GM12878 (cell line): ENCODE measurements at regions of chr5 and their contacts with region 1.

Region 1: DNA sequence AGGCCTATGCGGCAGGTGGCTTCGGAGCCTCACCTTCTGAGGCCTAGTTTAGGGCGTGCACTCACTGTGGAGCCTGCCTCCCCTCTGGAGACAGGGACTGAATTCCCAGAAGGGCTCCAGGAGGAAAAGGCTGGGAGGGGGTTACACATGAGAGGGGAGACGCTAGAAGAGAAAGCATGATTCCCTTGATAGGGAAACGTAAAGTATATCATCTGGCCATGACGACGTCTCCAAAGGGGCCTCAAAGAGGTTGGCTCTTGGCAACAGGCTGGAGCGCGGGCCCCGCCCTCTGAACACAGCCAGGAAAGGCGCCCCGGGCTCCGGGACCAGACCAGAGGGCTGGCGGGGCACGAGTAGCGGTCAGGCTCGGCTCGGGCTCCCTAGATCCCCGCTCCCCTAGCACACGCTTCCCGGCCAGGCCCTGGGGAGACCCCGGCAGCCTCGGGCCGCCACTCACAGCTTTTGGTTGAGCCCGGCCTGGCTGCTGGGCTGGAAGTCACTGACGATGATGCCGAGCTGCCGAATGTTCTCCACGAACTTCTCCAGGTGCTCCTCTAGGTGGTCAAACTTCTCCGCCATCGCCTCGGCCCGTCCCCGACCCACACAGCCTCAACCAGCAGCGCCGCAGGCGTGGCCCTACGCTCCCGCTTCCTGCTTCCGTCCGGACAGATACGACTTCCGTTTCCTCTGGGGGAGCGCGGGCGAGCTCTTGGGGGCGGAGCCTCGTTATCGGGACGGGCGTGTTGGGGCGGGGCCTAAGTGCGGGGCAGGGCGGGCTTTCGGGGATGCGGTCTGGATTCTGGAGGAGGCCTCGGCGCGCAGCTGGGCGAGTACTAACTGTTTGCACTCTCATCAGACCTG is at the start of gene MED10:
- DNase-seq: peak; percentile 75
- ATAC-seq: peak; percentile 97
- H3K4me3 ChIP-seq: peak within 1 kb of the TSS; percentile 99
- H3K27ac ChIP-seq: peak within 1 kb of the TSS; percentile 82
- H3K4me1 ChIP-seq: no peaks in the 10 kb centered on the region; the same call in 1 of the 2 replicates
- H3K27me3 ChIP-seq: no peaks in the 10 kb centered on the region
- CTCF ChIP-seq: no peak
- EP300 ChIP-seq: no peak
- POLR2A ChIP-seq: peak; percentile 96
- RAD21 ChIP-seq: no peak
- polyA plus RNA-seq, gene MED10: 37.1 to 49.5 TPM

Region 2: GRCh38 chr5:6480133-6481051 is 102.3 kb after region 1 on chr5:
- CTCF ChIA-PET with region 1: no interaction called
- POLR2A ChIA-PET with region 1: interaction called, 4 read pairs
- RAD21 ChIA-PET with region 1: interaction called, 4 read pairs
- SMC1A ChIA-PET with region 1: interaction called, 4 read pairs
- in situ Hi-C with region 1: no loop called
- intact Hi-C with region 1: loop called (anchors 5 kb)
- DNase-seq: peak; percentile 67
- ATAC-seq: peak; percentile 72
- H3K4me3 ChIP-seq: no peak overlapping the region
- H3K27ac ChIP-seq: peak overlapping the region; percentile 22; the same call in 1 of the 2 replicates
- H3K4me1 ChIP-seq: peaks cover 54% of the 10 kb centered on the region
- H3K27me3 ChIP-seq: no peaks in the 10 kb centered on the region
- CTCF ChIP-seq: peak; percentile 12 to 38 (median 17); a peak in 3 of 6 replicates
- EP300 ChIP-seq: peak; percentile 28 to 58; a peak in 1 of 4 replicates
- POLR2A ChIP-seq: no peak
- RAD21 ChIP-seq: peak; percentile 44

Region 3: GRCh38 chr5:6525910-6526309 is 147.8 kb after region 1 on chr5:
- CTCF ChIA-PET with region 1: no interaction called
- POLR2A ChIA-PET with region 1: no interaction called
- RAD21 ChIA-PET with region 1: interaction called, 3 read pairs
- SMC1A ChIA-PET with region 1: interaction called, 3 read pairs
- in situ Hi-C with region 1: no loop called
- intact Hi-C with region 1: loop called (anchors 2 kb)
- DNase-seq: no peak
- ATAC-seq: peak; percentile 82
- H3K4me3 ChIP-seq: no peak overlapping the region
- H3K27ac ChIP-seq: no peak overlapping the region
- H3K4me1 ChIP-seq: no peaks in the 10 kb centered on the region
- H3K27me3 ChIP-seq: peaks cover 0 to 4% of the 10 kb centered on the region in 2 experiments; a peak in 1 of 4 replicates
- CTCF ChIP-seq: peak; percentile 40 to 68 (median 43); a peak in 4 of 6 replicates
- EP300 ChIP-seq: no peak
- POLR2A ChIP-seq: no peak
- RAD21 ChIP-seq: peak; percentile 61

Region 4: DNA sequence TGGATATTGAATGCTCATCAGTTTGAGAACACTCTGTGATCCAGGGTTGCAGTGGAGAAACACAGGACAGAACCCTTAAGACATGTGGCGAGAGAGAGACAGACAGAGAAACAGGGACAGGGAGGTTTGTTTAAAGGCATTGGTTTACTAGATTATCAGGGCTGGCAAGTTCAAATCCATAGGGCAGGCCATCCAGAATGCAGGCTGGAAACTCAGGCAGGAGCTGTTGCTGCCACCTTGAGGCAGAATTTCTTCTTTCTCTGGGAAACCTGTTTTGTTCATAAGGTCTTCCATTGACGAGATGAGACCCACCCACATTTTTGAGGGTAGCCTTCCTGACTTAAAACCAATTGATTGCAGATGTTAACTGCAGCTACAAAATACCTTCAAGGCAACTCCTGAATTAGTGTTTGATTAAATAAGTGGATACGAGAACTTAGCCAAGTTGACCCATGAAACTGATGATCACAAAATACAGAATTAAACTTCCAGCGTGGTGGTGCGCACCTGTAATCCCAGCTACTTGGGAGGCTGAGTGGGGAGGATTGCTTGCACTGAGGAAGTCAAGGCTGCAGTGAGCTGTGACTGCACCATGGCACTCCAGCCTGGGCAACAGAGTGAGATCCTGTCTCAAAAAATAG is 198.8 kb after region 1 on chr5:
- CTCF ChIA-PET with region 1: interaction called, 5 read pairs
- POLR2A ChIA-PET with region 1: no interaction called
- RAD21 ChIA-PET with region 1: interaction called, 3 read pairs
- SMC1A ChIA-PET with region 1: no interaction called
- in situ Hi-C with region 1: no loop called
- intact Hi-C with region 1: loop called (anchors 10 kb)
- DNase-seq: peak; percentile 4
- ATAC-seq: peak; percentile 70
- H3K4me3 ChIP-seq: no peak overlapping the region
- H3K27ac ChIP-seq: no peak overlapping the region
- H3K4me1 ChIP-seq: no peaks in the 10 kb centered on the region
- H3K27me3 ChIP-seq: peaks cover 0 to 3% of the 10 kb centered on the region in 2 experiments; a peak in 3 of 4 replicates
- CTCF ChIP-seq: peak; percentile 49 to 70 (median 53); a peak in 5 of 6 replicates
- EP300 ChIP-seq: no peak
- POLR2A ChIP-seq: no peak
- RAD21 ChIP-seq: peak; percentile 77

Region 5: DNA sequence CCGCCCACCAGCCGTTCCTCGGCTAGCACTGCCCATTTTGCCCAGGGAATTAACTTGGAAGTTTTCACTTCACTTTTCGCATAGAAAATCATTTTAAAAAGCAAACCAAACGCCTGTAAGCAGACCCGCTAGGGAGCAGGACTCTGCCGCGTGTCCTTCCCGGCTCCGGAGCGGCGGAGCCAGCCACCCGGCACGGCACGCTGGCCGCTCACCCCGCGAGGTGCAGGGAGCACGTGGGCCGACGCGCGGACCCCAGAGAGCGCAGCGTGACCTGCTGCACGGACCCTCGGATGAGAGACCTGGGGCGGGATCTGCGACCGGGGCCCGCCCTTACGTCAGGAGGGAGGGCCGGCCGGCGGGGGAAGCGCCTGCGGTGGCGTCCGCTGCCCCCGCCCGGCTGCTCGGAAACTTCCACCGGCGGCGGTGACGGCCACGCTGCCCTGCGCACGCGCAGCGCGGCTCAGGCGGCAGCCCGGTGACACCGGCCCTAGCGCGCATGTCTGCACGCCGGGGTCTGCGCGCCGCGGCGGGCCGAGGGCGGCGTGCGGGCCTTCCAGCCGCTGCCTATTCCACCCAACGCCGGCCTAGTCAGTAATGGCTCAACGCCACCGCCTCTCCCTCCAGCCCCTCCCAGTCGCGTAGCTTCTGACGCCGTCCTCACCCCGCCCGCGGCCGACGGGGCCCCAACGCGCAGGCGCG is 334.6 kb after region 1 on chr5:
- CTCF ChIA-PET with region 1: no interaction called
- POLR2A ChIA-PET with region 1: no interaction called
- RAD21 ChIA-PET with region 1: no interaction called
- SMC1A ChIA-PET with region 1: no interaction called
- in situ Hi-C with region 1: no loop called
- intact Hi-C with region 1: loop called (anchors 5 kb)
- DNase-seq: peak; percentile 72
- ATAC-seq: peak; percentile 72
- H3K4me3 ChIP-seq: peak overlapping the region; percentile 85
- H3K27ac ChIP-seq: peak overlapping the region; percentile 93
- H3K4me1 ChIP-seq: peaks cover 26% of the 10 kb centered on the region
- H3K27me3 ChIP-seq: no peaks in the 10 kb centered on the region
- CTCF ChIP-seq: peak in 1 of 3 experiments; percentile 30; a peak in 2 of 6 replicates
- EP300 ChIP-seq: 0 out of 4 replicates have a peak, but pooled peaks of 1 of the 2 experiments have one; percentile 5
- POLR2A ChIP-seq: peak; percentile 75
- RAD21 ChIP-seq: no peak

Region 6: GRCh38 chr5:6728011-6728794 is 350.1 kb after region 1 on chr5:
- CTCF ChIA-PET with region 1: no interaction called
- POLR2A ChIA-PET with region 1: no interaction called
- RAD21 ChIA-PET with region 1: no interaction called
- SMC1A ChIA-PET with region 1: interaction called, 3 read pairs
- in situ Hi-C with region 1: loop called (anchors 10 kb)
- intact Hi-C with region 1: no loop called
- DNase-seq: no peak
- ATAC-seq: peak; percentile 89
- H3K4me3 ChIP-seq: peak overlapping the region; percentile 31
- H3K27ac ChIP-seq: peak overlapping the region; percentile 84
- H3K4me1 ChIP-seq: peaks cover 64% of the 10 kb centered on the region
- H3K27me3 ChIP-seq: no peaks in the 10 kb centered on the region
- CTCF ChIP-seq: no peak
- EP300 ChIP-seq: peak; percentile 64 to 91
- POLR2A ChIP-seq: 0 out of 2 replicates have a peak, but pooled peaks have one; percentile 15
- RAD21 ChIP-seq: no peak